Cardiac septum (tissue), 1 donor: ENCODE measurements at regions of chr4 and their contacts with region 1.

Region 1: GRCh38 chr4:120718979-120719566 is 203.5 kb downstream of the PRDM5 start:
- DNase-seq: no peak

Region 2: DNA sequence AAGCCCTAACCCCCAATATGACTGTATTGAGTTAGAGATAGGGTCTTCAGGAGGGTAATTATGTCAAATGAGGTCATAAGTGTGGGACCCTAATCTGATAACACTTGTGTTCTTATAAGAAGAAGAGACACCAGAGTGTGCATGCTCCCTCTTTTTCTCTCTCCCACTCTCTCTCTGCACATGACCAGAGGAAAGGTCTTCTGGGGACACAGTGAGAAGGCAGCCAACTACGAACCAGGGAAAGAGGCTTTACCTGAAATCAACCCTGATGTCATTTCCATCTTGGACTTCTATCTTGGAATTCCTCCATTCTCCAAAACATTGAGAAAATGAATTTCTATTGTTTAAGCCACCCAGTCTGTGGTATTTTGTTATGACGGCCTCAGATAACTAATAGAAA is 555.2 kb before region 1 on chr4:
- intact Hi-C with region 1: loop called (anchors 10 kb)
- DNase-seq: no peak

Region 3: DNA sequence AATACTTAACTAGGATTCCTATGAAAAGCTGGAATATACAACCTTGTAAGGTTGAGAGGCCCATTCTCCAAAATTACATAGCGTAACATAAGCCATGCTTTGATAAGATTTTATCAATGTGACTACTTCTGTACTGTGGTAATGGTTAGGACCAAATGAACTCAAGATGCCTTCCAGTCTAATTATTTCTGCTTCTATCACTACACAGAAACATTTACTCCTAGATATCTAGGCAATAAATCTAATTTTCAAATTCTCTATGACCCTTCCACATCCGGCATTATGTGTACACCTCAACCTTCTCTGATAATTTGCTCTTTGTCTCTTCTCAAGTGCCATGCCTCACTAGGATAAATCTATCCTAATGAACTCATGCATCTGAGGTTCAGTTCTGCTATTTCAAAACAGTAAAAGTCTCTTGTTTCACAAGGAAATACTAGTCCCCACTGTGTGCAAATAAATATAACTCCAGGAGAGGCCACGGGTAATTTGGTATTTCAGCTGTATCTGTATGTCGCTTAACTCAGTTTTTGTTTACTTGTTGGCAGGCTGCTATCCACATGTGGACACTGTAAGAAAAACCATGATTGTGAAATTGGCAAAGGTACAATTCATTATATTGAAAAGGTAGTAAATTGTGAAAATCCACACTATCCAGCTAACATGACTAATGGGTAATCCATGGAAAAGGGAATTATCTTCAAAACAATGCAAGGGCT is 110.2 kb after region 1 on chr4:
- intact Hi-C with region 1: loop called (anchors 5 kb)
- DNase-seq: no peak

Region 4: GRCh38 chr4:120922381-120923206 is 203.5 kb after region 1 on chr4 and contains the start of gene PRDM5:
- intact Hi-C with region 1: loop called (anchors 5 kb)
- DNase-seq: peak; percentile 79
- total RNA-seq, gene PRDM5: 24.3 TPM

Region 5: GRCh38 chr4:121227341-121227792 is 508.3 kb after region 1 on chr4:
- intact Hi-C with region 1: no loop called
- DNase-seq: no peak